ENCODE measurements at regions of chr10 and their contacts with region 1.

Region 1: DNA sequence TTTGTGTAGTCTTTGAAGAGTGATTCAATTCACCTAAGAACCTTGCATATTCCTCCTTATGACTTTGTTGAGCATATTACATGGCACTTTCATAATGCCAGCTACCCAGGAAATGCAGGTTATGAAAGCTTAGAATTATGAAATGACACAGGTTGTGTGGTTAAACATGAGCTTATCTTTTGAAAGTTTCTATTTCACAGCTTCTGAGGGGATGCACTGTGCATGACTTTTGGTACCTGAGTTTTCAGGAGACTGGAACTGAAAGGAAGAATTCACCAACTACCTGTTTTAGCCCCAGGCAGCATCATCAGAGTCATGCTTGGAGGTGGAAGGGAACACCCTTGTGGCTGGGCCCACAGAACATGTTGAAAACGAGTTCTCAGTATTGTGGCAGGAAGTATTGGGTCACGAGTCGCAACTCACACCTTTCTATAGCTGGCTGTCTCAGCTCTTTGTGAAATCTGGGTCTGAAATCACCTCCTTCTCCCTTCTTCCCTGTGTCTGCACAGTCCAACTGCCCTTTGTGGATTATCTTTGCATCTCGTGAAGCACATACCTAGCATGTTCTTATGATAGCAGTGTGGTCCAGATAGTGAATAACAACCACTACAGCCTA is 228.2 kb downstream of the PTEN start:
- DNase-seq: peak; percentile 53 to 82 (median 74)
- H3K4me3 ChIP-seq: no peak overlapping the region
- H3K4me3 Mint-ChIP-seq: peak overlapping the region in 6 of 7 donors; percentile 33 to 79 (median 59)
- H3K27ac ChIP-seq: peak overlapping the region; percentile 21
- H3K27ac Mint-ChIP-seq: peak overlapping the region; percentile 84 to 98 (median 90)
- H3K4me1 ChIP-seq: peaks cover 42% of the 10 kb centered on the region
- H3K4me1 Mint-ChIP-seq: peaks cover 48 to 57% (median 51%) of the 10 kb centered on the region in 3 donors
- H3K27me3 ChIP-seq: no peaks in the 10 kb centered on the region
- H3K27me3 Mint-ChIP-seq: no peaks in the 10 kb centered on the region

Region 2: GRCh38 chr10:87775766-87776165 is 315.8 kb before region 1 on chr10:
- CTCF ChIA-PET with region 1: no interaction called
- POLR2A ChIA-PET with region 1: interaction called, 14 read pairs
- DNase-seq: no peak
- H3K4me3 ChIP-seq: no peak overlapping the region
- H3K4me3 Mint-ChIP-seq: no peak overlapping the region
- H3K27ac ChIP-seq: no peak overlapping the region
- H3K27ac Mint-ChIP-seq: peak overlapping the region in 2 of 8 donors; percentile 15 to 70
- H3K4me1 ChIP-seq: no peaks in the 10 kb centered on the region
- H3K4me1 Mint-ChIP-seq: peaks cover 12 to 24% (median 22%) of the 10 kb centered on the region in 3 donors
- H3K27me3 ChIP-seq: no peaks in the 10 kb centered on the region
- H3K27me3 Mint-ChIP-seq: no peaks in the 10 kb centered on the region

Region 3: DNA sequence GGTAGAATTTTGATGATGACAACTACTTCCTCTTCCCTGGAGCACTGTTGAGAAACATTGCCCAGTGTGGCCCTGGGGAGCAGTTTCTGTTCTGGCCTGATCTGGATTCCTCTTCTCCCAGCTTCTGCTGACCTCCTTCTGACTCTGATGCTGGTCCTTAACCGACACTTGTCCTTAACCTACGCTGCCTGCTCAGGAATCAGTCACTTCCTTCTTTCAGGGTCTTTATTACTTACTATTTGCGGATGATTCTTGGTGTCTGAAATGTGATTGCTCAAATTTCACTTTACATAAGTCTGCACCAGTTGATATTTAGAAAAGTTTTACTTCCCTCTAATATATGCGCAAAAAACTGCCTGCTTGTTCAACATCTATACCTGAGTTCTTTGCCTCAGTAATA is 64.0 kb before region 1 on chr10:
- CTCF ChIA-PET with region 1: no interaction called
- POLR2A ChIA-PET with region 1: no interaction called
- DNase-seq: no peak
- H3K4me3 ChIP-seq: no peak overlapping the region
- H3K4me3 Mint-ChIP-seq: peak overlapping the region in 1 of 7 donors; percentile 26
- H3K27ac ChIP-seq: no peak overlapping the region
- H3K27ac Mint-ChIP-seq: peak overlapping the region in 7 of 8 donors; percentile 9 to 77 (median 69)
- H3K4me1 ChIP-seq: peaks cover 17% of the 10 kb centered on the region
- H3K4me1 Mint-ChIP-seq: peaks cover 18 to 21% (median 19%) of the 10 kb centered on the region in 3 donors
- H3K27me3 ChIP-seq: no peaks in the 10 kb centered on the region
- H3K27me3 Mint-ChIP-seq: no peaks in the 10 kb centered on the region

Region 4: DNA sequence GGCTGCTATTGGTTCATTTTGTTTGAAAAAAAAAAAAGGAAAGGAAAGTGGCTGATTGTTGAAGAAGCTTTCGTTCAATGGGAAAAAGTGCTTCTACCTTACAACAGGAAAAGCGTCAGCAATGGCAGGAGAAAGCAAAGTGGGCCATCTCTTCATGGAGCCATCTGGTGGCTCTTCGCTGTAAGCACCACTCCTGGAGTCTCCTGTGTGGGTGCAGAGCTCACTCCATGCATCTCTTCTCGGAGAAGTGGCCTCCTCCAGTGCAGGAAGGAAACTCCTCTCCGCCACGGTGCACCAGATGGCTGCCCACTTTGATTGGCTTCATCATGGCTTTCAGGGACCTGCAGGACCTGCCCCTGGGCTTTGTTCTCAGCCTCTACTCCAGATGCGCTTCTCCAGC is 22.8 kb after region 1 on chr10:
- CTCF ChIA-PET with region 1: interaction called, 10 read pairs
- POLR2A ChIA-PET with region 1: no interaction called
- DNase-seq: no peak
- H3K4me3 ChIP-seq: no peak overlapping the region
- H3K4me3 Mint-ChIP-seq: no peak overlapping the region
- H3K27ac ChIP-seq: no peak overlapping the region
- H3K27ac Mint-ChIP-seq: peak overlapping the region in 1 of 8 donors; percentile 53
- H3K4me1 ChIP-seq: peaks cover 22% of the 10 kb centered on the region
- H3K4me1 Mint-ChIP-seq: peaks cover 5 to 10% (median 7%) of the 10 kb centered on the region in 3 donors
- H3K27me3 ChIP-seq: no peaks in the 10 kb centered on the region
- H3K27me3 Mint-ChIP-seq: peaks cover 0 to 2% of the 10 kb centered on the region in 2 donors

Measured in CD8-positive, alpha-beta memory T cell (primary cell).